ENCODE measurements at regions of chr2 and their contacts with region 1.

Region 1: DNA sequence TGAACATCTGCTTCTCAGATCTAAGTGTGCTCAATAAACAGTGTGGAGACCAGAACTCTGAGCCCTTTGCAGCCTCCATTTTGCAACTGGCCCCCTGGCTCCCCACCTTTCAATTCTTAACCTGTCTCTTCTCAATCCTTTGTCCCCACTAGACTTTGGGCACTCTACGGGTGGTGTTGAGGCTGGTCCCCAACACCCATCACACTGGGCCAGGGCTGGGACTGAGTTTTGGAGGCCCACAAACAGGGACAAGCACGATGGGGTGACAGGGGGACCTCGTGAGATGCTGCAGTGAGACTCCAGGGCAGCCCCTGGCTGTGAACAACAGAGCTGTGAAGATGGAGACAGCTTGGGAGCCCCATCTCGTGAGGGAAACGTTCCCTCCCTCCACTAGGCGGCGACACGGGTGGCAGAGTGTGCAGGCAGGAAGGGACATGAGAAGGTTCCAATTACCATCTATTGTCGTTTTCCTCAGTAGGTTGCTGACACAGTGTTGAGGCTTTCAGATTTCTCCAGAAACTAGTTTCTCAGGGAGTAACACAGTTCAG is 1.2 kb downstream of the ANKMY1 start:
- DNase-seq: peak; percentile 78
- ATAC-seq: no peak

Region 2: GRCh38 chr2:240481720-240482119 is 74.9 kb before region 1 on chr2:
- intact Hi-C with region 1: no loop called
- DNase-seq: no peak
- ATAC-seq: no peak

Region 3: GRCh38 chr2:240595496-240596470 is 39.2 kb after region 1 on chr2:
- intact Hi-C with region 1: loop called (anchors 5 kb)
- DNase-seq: peak; percentile 73
- ATAC-seq: peak; percentile 27

Measured in Right ventricle myocardium inferior (tissue), 1 donor.